Ovary (tissue), 10 donors: ENCODE measurements at regions of chr11 and their contacts with region 1.

Region 1: DNA sequence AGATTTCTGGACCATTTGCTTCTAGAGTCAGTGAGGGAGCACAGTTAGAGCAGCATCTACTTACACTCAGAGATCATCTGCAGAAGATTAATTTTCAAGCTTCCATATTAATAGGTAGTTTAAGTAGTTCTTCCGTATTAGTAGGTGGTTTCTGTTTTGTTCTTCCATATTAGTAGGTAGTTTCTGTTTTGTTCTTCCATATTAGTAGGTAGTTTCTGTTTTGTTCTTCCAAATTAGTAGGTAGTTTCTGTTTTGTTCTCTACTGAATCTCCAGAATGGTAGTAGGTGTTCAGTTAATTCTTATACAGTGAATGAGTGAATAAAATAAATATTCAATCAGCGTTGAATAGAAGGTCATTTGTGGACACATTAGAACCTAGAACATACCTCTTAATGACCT is 175.7 kb downstream of the TMEM135 start:
- DNase-seq: no peak
- H3K4me3 ChIP-seq: no peak overlapping the region
- H3K27ac ChIP-seq: no peak overlapping the region
- H3K4me1 ChIP-seq: no peaks in the 10 kb centered on the region
- H3K27me3 ChIP-seq: no peaks in the 10 kb centered on the region
- CTCF ChIP-seq: no peak
- EP300 ChIP-seq: no peak
- POLR2A ChIP-seq: no peak

Region 2: DNA sequence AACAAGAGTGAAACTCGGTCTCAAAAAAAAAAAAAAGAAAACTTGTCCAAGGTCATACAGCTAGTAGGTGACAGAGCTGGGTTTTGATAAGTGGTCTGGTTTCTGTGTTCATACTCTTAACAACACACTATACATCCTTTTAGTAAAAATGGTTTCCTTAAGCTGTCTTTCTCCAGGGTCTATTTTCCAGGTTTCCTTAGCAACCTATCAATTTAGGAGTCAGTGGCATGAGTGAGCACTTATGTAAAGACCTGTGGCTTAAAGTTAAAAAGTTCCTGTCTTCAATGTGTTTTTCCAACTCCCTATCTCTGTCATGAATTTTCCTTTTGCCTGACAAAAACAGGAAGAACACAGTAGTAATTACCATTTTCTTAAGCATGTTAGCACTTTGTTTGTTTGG is 304.8 kb after region 1 on chr11:
- intact Hi-C with region 1: loop called in 1 of 4 experiments (anchors 10 kb)
- DNase-seq: no peak
- H3K4me3 ChIP-seq: no peak overlapping the region
- H3K27ac ChIP-seq: no peak overlapping the region
- H3K4me1 ChIP-seq: no peaks in the 10 kb centered on the region
- H3K27me3 ChIP-seq: no peaks in the 10 kb centered on the region
- CTCF ChIP-seq: no peak
- EP300 ChIP-seq: no peak
- POLR2A ChIP-seq: no peak